WTC11 (cell line): ENCODE measurements at regions of chr20 and their contacts with region 1.

Region 1: DNA sequence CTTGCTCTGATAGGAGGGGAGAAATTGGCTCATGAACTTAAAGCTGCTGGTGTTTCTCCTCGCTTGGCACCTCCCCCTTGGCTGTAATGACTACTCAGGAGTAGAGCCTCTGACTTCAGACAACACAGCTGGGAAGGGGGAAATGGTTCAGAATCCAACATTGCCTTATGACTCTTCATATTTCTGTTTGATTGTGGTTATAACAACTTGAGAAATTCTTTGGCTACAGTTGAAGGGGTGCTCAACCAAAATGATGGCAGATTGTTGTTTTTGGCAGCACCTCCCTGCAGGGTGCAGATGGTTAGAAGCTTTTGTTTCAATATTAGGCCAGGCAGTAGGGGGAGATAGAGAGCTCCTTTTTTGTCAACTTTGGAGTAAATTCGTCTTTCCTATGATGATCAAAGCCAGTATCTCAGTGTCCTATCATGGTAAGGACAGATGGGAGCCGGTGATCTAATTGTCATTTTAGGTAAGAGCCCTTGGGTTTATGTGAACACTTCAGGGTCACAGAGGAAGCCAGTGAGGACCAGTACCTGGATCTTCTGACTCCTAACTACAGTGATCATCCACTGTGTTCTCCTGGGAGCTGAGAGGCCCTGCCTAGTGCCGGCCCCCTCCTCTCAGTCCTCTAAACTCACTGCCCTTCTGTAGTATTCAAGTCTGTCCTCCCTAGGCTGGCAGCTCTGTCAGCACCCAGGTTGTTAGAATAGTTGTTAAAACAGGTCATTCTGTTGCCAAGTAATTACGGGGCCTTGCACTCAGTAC is 39.9 kb downstream of the RPRD1B start:
- DNase-seq: no peak
- ATAC-seq: peak; percentile 83
- H3K4me3 Mint-ChIP-seq: no peak overlapping the region
- H3K27ac Mint-ChIP-seq: no peak overlapping the region
- H3K4me1 Mint-ChIP-seq: peaks cover 6% of the 10 kb centered on the region
- H3K27me3 Mint-ChIP-seq: no peaks in the 10 kb centered on the region
- CTCF ChIP-seq: no peak; the same call in 1 of the 2 replicates

Region 2: GRCh38 chr20:37956084-37956483 is 117.4 kb before region 1 on chr20:
- CTCF ChIA-PET with region 1: no interaction called
- POLR2A ChIA-PET with region 1: no interaction called
- DNase-seq: no peak
- ATAC-seq: no peak
- H3K4me3 Mint-ChIP-seq: no peak overlapping the region
- H3K27ac Mint-ChIP-seq: no peak overlapping the region
- H3K4me1 Mint-ChIP-seq: no peaks in the 10 kb centered on the region
- H3K27me3 Mint-ChIP-seq: no peaks in the 10 kb centered on the region; the same call in 1 of the 2 replicates
- CTCF ChIP-seq: no peak

Region 3: GRCh38 chr20:38057351-38057972 is 16.0 kb before region 1 on chr20:
- CTCF ChIA-PET with region 1: interaction called, 58 read pairs
- POLR2A ChIA-PET with region 1: no interaction called
- DNase-seq: peak; percentile 94
- ATAC-seq: peak; percentile 99
- H3K4me3 Mint-ChIP-seq: no peak overlapping the region
- H3K27ac Mint-ChIP-seq: peak overlapping the region; percentile 71
- H3K4me1 Mint-ChIP-seq: no peaks in the 10 kb centered on the region
- H3K27me3 Mint-ChIP-seq: no peaks in the 10 kb centered on the region
- CTCF ChIP-seq: peak; percentile 81

Region 4: GRCh38 chr20:38094373-38094891 is 20.9 kb after region 1 on chr20:
- CTCF ChIA-PET with region 1: interaction called, 26 read pairs
- POLR2A ChIA-PET with region 1: no interaction called
- DNase-seq: no peak
- ATAC-seq: no peak
- H3K4me3 Mint-ChIP-seq: no peak overlapping the region
- H3K27ac Mint-ChIP-seq: no peak overlapping the region
- H3K4me1 Mint-ChIP-seq: no peaks in the 10 kb centered on the region
- H3K27me3 Mint-ChIP-seq: no peaks in the 10 kb centered on the region
- CTCF ChIP-seq: no peak

Region 5: DNA sequence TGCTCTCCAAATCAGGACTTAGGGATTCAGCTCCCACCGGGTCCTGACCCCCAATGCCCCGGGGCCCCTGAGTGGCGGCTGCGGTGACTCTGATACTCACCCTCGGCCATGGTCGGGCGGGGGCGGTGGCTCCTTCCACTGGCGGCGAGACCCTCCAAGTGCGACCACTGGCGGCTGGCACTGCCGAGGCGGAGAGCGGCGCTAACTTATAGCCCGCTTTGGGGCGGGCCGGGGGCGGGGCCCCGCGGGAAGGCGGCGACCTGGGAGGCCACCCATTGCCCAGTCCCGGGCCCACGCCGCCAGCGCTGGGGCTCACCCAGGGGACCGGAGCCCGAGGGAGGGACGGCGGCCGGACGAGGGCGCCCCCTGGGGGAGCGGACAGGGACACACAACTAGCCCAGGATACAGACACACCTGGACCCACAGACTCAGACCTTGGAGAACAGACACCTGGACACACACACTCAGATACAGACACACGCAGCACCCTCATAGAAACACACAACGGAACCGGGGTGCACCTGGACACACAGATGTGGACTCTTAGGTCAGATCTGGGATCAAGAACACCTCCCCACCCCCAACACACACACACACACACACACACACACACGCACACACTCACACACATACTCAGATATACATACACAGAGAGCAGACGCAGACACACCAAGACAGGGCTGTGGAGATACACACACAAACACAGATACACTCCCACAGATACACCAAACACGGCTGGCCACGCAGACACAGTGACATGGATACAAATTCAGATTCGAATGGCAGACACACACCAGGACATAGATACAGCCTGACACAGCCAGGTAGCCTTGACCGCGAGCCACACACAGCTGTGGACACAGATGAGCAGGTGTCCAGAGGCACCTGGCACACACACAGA is 91.8 kb after region 1 on chr20 and contains the start of gene TGM2:
- CTCF ChIA-PET with region 1: interaction called, 12 read pairs
- POLR2A ChIA-PET with region 1: no interaction called
- DNase-seq: peak; percentile 63
- ATAC-seq: peak; percentile 89
- H3K4me3 Mint-ChIP-seq: peak within 1 kb of the TSS; percentile 48
- H3K27ac Mint-ChIP-seq: no peak within 1 kb of the TSS
- H3K4me1 Mint-ChIP-seq: 0 out of 2 replicates have a peak, but pooled peaks cover 4% of the 10 kb centered on the region
- H3K27me3 Mint-ChIP-seq: no peaks in the 10 kb centered on the region
- CTCF ChIP-seq: peak; percentile 76
- total RNA-seq, gene TGM2: 1.5 to 2.1 TPM (median 1.8 TPM) in 3 replicates

Region 6: GRCh38 chr20:38229376-38230252 is 156.1 kb after region 1 on chr20:
- CTCF ChIA-PET with region 1: interaction called, 10 read pairs
- POLR2A ChIA-PET with region 1: no interaction called
- DNase-seq: no peak
- ATAC-seq: peak; percentile 60
- H3K4me3 Mint-ChIP-seq: no peak overlapping the region
- H3K27ac Mint-ChIP-seq: no peak overlapping the region
- H3K4me1 Mint-ChIP-seq: 0 out of 2 replicates have a peak, but pooled peaks cover 3% of the 10 kb centered on the region
- H3K27me3 Mint-ChIP-seq: no peaks in the 10 kb centered on the region
- CTCF ChIP-seq: peak; percentile 38; the same call in 1 of the 2 replicates

Region 7: DNA sequence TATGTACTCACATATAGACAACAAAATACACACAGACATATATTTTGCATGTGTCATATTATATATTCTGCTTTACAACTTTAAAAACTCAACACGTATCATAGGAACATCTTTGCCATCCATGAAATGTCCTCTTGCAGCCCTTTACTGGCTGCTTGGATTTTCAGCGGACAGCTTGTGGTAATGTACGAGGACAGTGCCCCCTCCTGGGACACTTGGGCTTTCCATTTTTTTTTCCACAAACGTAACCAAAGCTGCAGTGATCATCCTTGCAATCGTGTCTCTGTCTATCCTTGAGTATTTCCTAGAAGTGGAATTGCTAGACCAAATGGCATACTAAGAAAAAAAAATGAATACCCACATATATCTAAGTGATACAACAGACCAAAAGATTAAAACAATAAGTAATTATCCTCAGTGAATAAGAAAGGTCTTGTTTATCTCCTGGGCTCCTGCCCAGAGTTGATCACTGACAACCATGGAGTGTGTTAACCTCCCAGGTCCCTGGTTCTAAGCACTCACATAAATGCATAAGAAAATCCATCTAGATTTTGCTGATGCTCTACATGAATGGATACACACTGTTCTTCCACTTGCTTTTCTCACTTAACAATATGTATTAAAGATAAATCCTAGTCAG is 248.6 kb after region 1 on chr20:
- CTCF ChIA-PET with region 1: interaction called, 10 read pairs
- POLR2A ChIA-PET with region 1: no interaction called
- DNase-seq: peak; percentile 35
- ATAC-seq: peak; percentile 62
- H3K4me3 Mint-ChIP-seq: no peak overlapping the region
- H3K27ac Mint-ChIP-seq: no peak overlapping the region
- H3K4me1 Mint-ChIP-seq: no peaks in the 10 kb centered on the region
- H3K27me3 Mint-ChIP-seq: peaks cover 2% of the 10 kb centered on the region; the same call in 1 of the 2 replicates
- CTCF ChIP-seq: peak; percentile 45